ENCODE measurements at regions of chr5 and their contacts with region 1.

Region 1: DNA sequence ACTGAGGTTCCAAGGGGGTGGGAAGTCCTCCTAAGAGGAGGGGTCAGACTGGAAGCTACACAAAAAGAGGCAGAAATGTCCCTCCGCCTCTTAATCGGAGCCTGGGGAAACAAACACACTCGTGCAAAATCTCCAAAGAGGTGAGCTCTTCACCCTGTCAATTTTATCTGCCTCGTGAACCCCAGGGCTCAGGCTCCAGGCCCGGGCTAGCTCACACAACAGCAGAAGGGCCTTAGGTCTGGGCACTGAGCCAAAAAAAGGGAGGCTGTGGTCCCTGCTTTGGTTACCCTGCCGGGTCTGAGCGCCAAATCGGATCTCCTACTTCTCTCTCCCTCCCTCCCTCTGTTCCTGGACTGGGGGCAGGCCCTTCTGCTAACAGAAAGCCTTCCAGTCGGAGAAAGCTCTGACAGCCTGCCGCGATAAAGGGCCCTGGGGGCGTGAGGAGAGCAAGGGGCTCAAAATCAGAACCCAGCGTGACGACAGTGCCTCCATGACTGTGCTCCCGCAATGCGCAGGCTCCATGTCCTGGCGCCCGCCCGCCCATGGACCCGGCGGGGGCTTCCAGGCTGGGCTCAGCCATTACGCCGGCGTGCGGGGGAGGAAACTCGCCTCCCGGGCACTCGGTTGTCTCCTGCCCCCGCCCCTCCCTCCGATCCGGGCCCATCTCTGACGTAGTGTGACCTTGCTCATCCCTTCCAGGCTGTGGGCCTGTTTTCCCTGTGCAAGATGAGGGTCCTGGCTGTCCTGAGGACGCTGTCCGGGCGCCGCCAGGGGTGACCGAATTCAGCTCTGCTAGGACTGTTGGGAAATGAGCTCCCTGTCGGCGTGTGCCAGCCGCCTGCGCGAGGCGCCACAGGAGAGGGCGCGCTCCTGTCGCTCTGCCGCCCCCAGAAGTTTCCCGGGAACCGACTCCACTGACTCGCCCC is 865 bp upstream of the SLC22A4 start:
- DNase-seq: peak; percentile 92 to 97 (median 94)
- H3K4me3 ChIP-seq: peak overlapping the region; percentile 27 to 73 (median 66)
- H3K27ac ChIP-seq: peak overlapping the region; percentile 92 to 100 (median 99)
- H3K4me1 ChIP-seq: peaks cover 0 to 22% of the 10 kb centered on the region in 2 donors
- H3K27me3 ChIP-seq: no peaks in the 10 kb centered on the region
- CTCF ChIP-seq: peak in 2 of 6 experiments; percentile 0 to 3
- POLR2A ChIP-seq: peak; percentile 21 to 65

Region 2: DNA sequence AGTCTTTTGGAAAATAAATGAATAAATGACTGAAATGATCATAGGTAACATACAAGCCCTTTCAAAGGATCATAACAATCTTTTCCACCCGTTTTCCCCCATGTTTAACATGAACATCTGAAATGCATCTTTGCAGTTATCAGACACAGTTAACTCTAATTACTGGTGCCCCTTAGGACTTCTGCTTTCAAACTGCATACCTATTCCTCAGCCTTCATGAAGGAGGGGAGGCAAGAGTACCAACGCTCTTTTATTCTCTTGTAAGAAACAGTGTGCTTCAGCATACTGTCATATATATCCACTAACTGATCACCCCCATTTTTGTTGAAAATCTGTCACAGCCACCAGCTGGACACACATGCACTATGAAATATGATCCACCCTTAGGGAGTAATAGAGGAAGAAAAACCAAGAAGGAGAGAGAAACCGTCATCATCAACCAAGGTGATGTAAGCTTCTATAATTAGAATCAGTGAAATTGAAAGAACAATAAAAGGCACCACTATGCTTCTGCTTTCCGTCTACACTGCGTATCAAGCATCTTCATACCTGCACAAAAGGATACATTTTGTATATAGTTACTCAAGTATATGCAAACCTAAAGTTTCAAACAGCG is 757.0 kb before region 1 on chr5:
- intact Hi-C with region 1: no loop called
- DNase-seq: no peak
- H3K4me3 ChIP-seq: no peak overlapping the region
- H3K27ac ChIP-seq: no peak overlapping the region
- H3K4me1 ChIP-seq: peaks cover 6 to 10% of the 10 kb centered on the region in 2 donors
- H3K27me3 ChIP-seq: no peaks in the 10 kb centered on the region
- CTCF ChIP-seq: no peak
- POLR2A ChIP-seq: no peak

Region 3: DNA sequence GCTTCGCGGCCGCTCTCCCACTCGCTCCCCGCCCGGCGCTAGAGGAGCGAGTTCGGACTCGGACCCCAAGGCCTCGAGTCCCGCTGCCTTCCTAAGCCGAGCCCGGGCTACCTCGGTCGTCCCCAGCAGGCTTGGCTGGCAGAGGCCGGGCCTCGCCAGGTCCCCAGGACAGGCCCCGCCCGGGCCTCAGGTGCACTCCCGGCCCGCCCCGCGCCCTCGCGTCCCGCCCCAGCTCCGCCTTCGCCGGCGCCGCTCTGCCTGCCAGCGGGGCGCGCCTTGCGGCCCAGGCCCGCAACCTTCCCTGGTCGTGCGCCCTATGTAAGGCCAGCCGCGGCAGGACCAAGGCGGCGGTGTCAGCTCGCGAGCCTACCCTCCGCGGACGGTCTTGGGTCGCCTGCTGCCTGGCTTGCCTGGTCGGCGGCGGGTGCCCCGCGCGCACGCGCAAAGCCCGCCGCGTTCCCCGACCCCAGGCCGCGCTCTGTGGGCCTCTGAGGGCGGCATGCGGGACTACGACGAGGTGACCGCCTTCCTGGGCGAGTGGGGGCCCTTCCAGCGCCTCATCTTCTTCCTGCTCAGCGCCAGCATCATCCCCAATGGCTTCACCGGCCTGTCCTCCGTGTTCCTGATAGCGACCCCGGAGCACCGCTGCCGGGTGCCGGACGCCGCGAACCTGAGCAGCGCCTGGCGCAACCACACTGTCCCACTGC is 76.3 kb after region 1 on chr5 and contains the start of gene SLC22A5:
- intact Hi-C with region 1: loop called in 1 of 2 experiments (anchors 10 kb)
- DNase-seq: peak; percentile 61 to 78 (median 73)
- H3K4me3 ChIP-seq: peak within 1 kb of the TSS; percentile 2 to 75 (median 67)
- H3K27ac ChIP-seq: peak within 1 kb of the TSS; percentile 30 to 91 (median 86)
- H3K4me1 ChIP-seq: peaks cover 20 to 41% of the 10 kb centered on the region in 2 donors
- H3K27me3 ChIP-seq: no peaks in the 10 kb centered on the region
- CTCF ChIP-seq: peak in 1 of 6 experiments; percentile 14
- POLR2A ChIP-seq: peak; percentile 53 to 75
- total RNA-seq, gene SLC22A5: 4.4 to 24.1 (median 14.8) TPM

Measured in adrenal gland (tissue), 19 donors.